Prostate gland (tissue), 2 donors: ENCODE measurements at regions of chr17 and their contacts with region 1.

Region 1: DNA sequence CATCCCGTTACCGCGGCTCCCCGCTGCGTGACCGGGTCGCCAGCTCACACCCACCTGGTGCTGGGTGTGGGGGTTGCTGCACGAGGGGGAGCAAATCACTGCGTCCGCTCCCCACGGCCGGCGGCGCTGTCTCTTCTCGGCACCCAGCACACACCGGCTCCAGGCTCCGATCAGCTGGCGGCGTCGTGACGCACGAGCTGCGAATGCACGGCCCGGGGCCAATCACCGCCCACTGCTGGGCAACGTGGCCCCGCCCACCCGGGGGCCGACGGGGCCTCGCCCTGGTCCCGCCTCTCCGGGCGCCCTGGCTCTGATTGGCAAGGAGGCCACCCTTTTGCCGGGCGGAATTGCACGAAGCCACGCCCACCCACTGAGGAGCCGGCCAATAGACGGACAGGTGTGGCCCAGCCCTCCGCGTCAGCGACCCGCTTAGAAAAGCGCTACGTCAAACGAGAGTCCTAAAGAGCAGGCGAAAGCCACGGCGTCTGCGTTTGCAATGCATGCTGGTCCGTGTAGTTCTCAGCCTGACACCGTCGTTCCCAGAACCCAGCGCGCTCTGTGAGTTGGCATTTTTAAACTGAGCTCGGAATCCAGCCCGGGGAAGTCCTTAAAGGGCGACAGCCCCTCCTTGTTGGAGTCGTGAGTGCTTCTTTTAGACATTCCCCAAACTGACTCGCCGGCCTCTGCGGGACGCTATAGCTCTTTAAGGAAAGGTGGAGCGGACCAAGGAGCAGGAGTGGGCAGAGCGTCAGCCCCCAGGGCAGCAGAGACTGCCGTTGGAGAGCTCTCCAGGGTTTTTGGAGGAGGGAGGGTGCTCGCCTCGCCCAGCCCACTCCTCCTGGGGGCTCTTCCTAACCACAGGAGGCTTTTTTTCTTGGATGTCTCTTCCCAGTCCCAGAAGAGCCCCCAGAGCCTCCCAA is 6.2 kb upstream of the TLCD2 start:
- DNase-seq: peak; percentile 100
- H3K4me3 ChIP-seq: peak overlapping the region; percentile 74 to 94
- H3K27ac ChIP-seq: peak overlapping the region; percentile 99 to 100
- H3K4me1 ChIP-seq: peaks cover 10% of the 10 kb centered on the region
- H3K27me3 ChIP-seq: no peaks in the 10 kb centered on the region
- CTCF ChIP-seq: peak in 2 of 4 experiments; percentile 19 to 27
- POLR2A ChIP-seq: peak; percentile 99

Region 2: GRCh38 chr17:1573916-1574696 is 142.2 kb before region 1 on chr17:
- intact Hi-C with region 1: loop called (anchors 10 kb)
- DNase-seq: peak; percentile 81
- H3K4me3 ChIP-seq: no peak overlapping the region
- H3K27ac ChIP-seq: peak overlapping the region; percentile 74 to 81
- H3K4me1 ChIP-seq: peaks cover 15% of the 10 kb centered on the region
- H3K27me3 ChIP-seq: no peaks in the 10 kb centered on the region
- CTCF ChIP-seq: peak; percentile 91 to 99 (median 98)
- POLR2A ChIP-seq: no peak

Region 3: GRCh38 chr17:1673041-1673785 is 43.1 kb before region 1 on chr17:
- intact Hi-C with region 1: loop called (anchors 5 kb)
- DNase-seq: no peak
- H3K4me3 ChIP-seq: no peak overlapping the region
- H3K27ac ChIP-seq: no peak overlapping the region
- H3K4me1 ChIP-seq: no peaks in the 10 kb centered on the region
- H3K27me3 ChIP-seq: no peaks in the 10 kb centered on the region
- CTCF ChIP-seq: no peak
- POLR2A ChIP-seq: no peak

Region 4: DNA sequence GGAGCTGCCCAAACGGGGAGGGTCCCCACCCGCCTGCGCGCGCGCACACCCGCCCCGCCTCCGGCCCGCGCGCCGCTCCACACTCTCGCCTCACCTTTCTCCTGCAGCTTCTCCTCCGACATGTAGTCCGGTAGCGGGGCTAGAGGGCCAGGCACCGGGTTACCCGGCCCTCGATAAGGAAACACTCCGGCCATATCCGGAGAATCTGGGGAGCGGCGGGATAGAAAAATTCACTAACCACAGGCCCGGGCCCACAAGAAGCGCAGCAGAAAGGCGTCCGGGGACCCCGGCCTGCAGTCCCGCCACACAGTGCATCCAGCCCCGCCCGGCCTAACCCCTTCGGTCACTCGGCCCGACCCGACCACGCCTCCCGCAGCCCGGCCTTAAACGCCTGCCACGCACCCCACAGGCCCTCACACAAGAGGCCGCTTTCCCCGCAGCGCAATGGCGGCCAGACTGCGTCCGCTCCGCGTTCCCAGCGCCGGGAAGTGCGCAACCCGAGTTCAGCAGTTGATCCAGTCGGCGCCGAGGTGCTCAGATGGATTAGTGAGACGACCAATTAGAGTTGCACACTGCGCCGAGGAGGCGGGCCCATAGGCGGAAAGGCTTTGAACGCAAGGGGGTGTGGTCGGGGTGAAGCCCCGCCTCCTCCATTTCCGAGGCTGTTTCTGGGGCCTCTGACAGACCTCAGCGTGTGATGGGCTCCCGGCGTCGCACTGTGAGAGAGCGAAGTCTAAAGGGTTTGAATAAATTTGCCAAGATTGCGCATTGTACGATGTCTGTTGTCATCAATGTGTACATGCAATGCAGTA is 31.8 kb before region 1 on chr17 and contains the start of gene PRPF8:
- intact Hi-C with region 1: loop called (anchors 2 kb)
- DNase-seq: peak; percentile 98
- H3K4me3 ChIP-seq: peak within 1 kb of the TSS; percentile 88 to 93
- H3K27ac ChIP-seq: peak within 1 kb of the TSS; percentile 92 to 97
- H3K4me1 ChIP-seq: peaks cover 6% of the 10 kb centered on the region
- H3K27me3 ChIP-seq: no peaks in the 10 kb centered on the region
- CTCF ChIP-seq: peak in 1 of 4 experiments; percentile 18
- POLR2A ChIP-seq: peak; percentile 90
- total RNA-seq, gene PRPF8: 235 to 321 TPM